ENCODE measurements at regions of chr12 and their contacts with region 1.

Region 1: GRCh38 chr12:117134059-117134458 is 34.8 kb upstream of the TESC start:
- DNase-seq: peak; percentile 86
- H3K4me3 Mint-ChIP-seq: peak overlapping the region; percentile 44
- H3K27ac Mint-ChIP-seq: peak overlapping the region; percentile 76
- H3K4me1 Mint-ChIP-seq: peaks cover 18% of the 10 kb centered on the region
- H3K27me3 Mint-ChIP-seq: no peaks in the 10 kb centered on the region

Region 2: DNA sequence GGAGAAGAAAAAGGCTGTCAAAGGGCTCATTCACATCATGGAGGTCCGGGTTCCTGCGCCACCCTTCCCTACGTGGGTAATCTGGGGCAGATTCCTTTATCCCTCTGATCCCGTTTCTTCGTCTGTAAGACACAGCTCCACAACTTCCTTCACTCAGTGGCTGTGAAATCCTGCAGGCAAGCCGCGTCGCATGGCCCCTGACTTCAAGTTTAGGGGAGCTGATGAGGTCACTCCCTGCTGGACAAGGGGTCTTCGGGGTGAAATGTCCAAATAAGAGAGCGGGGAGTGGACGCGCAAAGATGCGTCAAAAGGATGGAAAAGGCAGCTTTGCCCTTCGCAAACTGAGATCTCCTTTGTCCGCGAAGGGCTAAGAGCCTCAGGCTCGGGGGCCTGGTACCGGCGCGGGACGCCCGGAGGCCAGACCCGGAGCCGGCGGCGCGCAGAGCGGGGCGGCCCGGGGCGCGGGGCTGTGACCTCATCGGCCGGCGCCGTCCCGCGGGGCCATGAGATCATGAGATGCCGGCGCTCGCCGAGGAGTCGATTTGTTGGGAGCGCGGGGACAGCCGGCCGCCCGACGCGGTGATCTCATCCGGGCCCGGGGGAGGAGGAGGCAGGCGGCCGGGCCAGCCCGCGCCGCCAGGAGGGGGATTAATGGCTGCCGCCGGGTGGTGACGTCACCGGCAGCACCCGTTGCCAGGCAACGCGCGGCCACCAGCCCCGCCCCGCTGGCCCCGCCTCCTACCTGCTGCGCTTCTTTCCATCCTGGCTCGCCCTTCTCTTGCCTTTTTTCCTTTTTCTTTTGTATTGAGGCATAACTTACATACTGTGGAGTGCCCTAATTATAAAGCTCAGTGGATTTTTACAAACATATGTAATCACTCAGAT is 314.9 kb before region 1 on chr12:
- intact Hi-C with region 1: loop called (anchors 5 kb)
- DNase-seq: peak; percentile 97
- H3K4me3 Mint-ChIP-seq: peak overlapping the region; percentile 96
- H3K27ac Mint-ChIP-seq: peak overlapping the region; percentile 98
- H3K4me1 Mint-ChIP-seq: peaks cover 22% of the 10 kb centered on the region
- H3K27me3 Mint-ChIP-seq: peaks cover 12% of the 10 kb centered on the region

Region 3: GRCh38 chr12:116955382-116956021 is 178.6 kb before region 1 on chr12:
- intact Hi-C with region 1: loop called (anchors 5 kb)
- DNase-seq: peak; percentile 70
- H3K4me3 Mint-ChIP-seq: no peak overlapping the region
- H3K27ac Mint-ChIP-seq: no peak overlapping the region
- H3K4me1 Mint-ChIP-seq: peaks cover 19% of the 10 kb centered on the region
- H3K27me3 Mint-ChIP-seq: no peaks in the 10 kb centered on the region

Region 4: DNA sequence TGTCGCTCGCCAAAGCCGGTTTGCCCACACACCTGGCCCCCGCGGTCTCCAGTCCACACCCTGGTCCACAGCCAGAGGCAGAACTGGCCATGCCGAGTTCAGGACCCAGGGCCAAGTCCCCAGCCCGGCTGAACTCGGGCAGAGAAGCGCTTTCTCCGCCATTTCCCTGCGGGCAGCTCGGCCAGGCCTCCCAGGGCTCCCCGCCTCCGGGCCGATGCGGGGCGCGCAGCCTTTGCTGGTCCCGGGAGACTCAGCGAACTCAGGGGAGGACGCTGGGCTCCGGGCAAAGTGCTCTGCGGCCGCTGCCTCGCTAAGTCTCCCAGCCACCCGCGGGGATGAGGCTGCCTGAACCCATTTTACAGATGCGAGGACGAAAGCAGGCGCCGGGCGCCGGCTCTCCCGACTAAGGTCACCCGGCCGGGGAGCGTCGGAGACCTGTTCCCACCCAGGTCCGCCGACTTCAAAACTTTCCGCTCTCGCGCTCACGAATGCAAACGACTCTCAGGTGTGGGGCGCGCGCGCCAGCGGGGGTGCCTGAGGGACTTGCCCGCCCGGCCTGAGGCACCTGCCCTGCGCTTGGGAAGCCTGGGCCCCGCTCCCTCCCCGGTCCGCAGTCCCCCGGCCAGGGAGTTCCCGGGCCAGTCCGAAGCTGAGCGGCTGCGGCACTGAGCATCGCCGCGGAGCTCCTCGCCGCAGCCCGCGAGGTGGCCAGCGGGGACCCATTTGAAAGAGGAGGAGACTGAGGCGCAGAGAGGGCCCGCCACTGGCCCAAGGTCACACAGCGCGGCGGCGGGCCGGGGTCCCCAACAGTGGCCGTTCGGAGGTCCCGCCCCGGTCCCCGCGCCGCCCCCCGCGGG is 35.5 kb before region 1 on chr12:
- intact Hi-C with region 1: loop called (anchors 1 kb)
- DNase-seq: peak; percentile 79
- H3K4me3 Mint-ChIP-seq: peak overlapping the region; percentile 82
- H3K27ac Mint-ChIP-seq: peak overlapping the region; percentile 53
- H3K4me1 Mint-ChIP-seq: peaks cover 25% of the 10 kb centered on the region
- H3K27me3 Mint-ChIP-seq: peaks cover 25% of the 10 kb centered on the region

Region 5: DNA sequence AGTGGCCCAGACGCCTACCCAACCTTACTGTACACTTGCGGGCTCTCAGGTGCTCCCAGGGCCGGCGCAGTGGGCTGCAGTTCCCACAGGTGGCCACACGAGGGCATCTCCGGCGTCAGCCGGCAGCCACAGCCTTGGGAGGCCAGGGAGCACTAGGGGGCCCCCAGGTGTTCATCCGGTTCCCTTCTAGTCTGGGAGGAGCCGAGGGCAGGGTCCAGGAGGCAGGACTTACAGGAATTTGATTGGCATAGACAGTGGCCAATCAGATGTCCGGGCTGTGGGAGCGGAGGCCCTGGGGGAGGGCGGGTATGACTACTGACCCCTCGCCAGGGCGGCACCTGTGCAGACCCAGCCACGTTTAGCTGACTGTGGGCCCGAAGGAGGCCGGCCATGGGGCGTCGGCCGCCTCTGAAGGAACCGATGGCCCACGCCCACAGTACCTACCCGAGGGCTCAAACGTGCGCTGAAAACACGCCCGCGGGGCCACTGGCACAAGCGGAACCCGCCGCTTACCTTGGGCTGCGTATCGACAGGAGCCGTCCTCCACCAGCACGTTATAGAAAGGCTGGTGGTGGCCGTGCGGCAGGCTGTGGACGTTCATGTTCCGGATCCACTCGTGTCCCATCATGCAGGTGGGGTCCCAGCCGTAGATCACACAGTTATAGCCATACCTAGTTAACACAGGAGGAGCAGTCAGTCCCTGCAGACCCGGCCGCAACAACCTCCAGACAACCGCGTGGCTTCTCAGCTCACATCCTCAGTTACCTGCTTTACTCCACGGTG is 21.4 kb after region 1 on chr12:
- intact Hi-C with region 1: loop called (anchors 1 kb)
- DNase-seq: peak; percentile 91
- H3K4me3 Mint-ChIP-seq: no peak overlapping the region
- H3K27ac Mint-ChIP-seq: no peak overlapping the region
- H3K4me1 Mint-ChIP-seq: peaks cover 19% of the 10 kb centered on the region
- H3K27me3 Mint-ChIP-seq: no peaks in the 10 kb centered on the region

Measured in activated CD4-positive, alpha-beta T cell treated with anti-CD3 and anti-CD28 coated beads, Interleukin-2, amount 10 ng/mL, durations not matched to agents 24 days and 14 days (primary cell).